ENCODE measurements at regions of chr16 and their contacts with region 1.

Region 1: DNA sequence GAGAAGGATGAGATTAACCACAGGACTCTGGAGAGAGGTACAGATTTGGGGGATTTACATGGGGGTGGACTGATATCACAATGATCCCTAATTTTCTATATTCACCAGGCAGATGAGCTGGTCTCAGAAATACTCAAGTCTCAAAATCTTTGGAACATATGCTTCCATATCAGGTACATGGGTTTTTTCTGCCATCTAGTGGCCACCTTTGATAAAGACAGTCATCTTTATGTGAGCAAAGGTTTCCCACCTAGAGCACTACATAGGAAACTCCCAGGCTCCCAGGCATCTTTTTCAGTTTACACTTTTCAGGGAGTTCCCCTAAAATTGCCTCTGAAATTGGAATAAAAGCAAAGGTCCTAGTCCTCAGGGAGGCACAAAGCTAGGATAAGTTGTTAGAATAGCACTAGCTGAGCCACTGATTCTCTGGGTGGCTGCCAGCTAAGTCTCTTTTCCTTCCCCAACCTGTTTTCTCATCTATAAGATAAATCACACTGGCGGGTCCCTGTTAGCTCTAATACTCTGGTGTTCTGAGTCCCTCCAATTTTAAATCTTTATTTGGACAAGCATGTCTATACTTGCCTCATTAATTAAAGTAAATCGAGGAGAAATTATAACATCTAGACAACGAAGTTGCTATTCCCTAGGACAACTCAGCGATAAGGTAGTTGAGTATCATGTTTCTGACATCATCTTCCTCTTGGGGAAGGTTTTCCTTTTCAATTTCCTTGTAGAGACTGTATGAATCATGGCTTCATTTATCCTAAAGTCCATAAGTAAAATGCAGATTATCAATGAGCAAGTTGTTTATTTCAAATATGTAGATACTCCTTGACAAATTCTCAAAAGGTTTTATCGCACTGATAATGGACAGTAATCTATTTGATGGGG is 19.0 kb upstream of the MON1B start:
- DNase-seq: peak; percentile 51
- H3K4me3 ChIP-seq: no peak overlapping the region
- H3K27ac ChIP-seq: no peak overlapping the region
- H3K4me1 ChIP-seq: no peaks in the 10 kb centered on the region
- H3K27me3 ChIP-seq: peaks cover 2% of the 10 kb centered on the region
- CTCF ChIP-seq: peak; percentile 48 to 71

Region 2: DNA sequence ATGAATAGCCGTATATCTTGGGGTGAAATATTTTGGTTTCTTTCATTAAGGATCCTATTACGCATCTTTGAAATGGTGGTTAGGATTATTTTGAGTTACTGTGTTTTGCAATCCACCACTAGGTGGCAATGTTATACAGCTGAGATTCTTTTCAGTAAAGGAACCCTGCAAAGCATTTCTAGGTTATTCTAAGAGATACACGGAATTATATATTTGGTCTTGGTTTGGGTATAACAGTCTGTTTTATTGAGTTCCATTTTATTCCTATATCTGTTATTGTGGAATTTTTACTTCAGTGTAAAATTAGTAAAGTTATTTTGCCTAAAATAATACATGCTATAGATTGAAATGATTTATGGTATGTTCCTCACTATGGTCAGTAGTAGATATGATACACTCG is 1382.8 kb before region 1 on chr16:
- CTCF ChIA-PET with region 1: no interaction called
- dilution Hi-C with region 1: loop called (anchors 25 kb)
- in situ Hi-C with region 1: loop called (anchors 10 kb)
- intact Hi-C with region 1: loop called (anchors 1 kb)
- DNase-seq: peak; percentile 39
- H3K4me3 ChIP-seq: no peak overlapping the region
- H3K27ac ChIP-seq: no peak overlapping the region
- H3K4me1 ChIP-seq: no peaks in the 10 kb centered on the region
- H3K27me3 ChIP-seq: no peaks in the 10 kb centered on the region
- CTCF ChIP-seq: peak; percentile 63 to 69

Region 3: DNA sequence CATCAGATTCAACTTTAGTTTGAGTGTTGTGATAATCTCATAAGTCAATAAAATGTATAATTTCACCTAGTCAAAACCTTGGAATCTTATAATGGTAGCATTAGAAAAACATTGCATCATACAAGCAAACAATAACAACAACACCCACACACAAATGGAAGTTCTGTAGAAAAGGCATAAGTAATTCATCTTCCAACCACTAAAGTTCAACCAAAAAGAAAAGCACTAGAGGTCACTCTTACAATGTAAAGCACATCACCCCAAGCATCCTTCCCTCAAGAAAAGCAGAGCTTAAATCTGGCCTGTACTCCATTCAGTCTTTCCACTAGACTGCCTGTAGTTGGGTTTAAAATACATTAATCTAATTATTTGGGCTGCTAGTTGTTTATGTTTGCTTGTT is 893.0 kb before region 1 on chr16:
- CTCF ChIA-PET with region 1: no interaction called
- dilution Hi-C with region 1: no loop called
- in situ Hi-C with region 1: no loop called
- intact Hi-C with region 1: loop called (anchors 10 kb)
- DNase-seq: peak; percentile 7
- H3K4me3 ChIP-seq: no peak overlapping the region
- H3K27ac ChIP-seq: no peak overlapping the region
- H3K4me1 ChIP-seq: no peaks in the 10 kb centered on the region
- H3K27me3 ChIP-seq: peaks cover 4% of the 10 kb centered on the region
- CTCF ChIP-seq: peak; percentile 7 to 42

Region 4: DNA sequence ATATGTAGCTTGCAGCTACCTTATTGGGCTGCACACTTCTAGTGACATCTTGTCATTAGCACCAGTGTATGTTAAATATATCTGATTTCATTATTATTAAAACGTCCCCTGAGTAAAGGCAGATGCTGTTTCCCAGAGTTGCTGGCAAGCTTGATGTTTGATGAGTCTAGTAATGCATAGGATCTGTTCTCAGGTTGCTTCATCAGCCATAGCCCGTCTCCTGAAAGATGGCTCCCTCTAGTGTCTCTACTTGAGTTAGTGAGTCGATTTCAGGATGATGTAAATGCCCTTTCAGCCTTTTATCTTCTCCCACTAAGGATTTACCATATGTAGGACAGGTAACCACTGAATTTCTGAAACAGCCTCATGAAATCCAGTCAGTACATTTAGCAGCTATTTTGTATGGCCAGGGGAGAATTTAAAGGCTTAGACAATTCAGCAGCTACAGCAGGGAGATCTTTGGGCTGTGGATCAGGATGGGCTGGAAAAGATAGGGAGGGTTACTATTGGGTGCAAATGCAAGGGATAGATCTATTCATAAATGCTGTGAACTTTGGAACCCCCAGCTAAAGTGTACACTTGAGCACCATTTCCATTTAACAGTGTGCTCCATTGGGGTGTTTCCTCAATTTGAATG is 518.5 kb before region 1 on chr16:
- CTCF ChIA-PET with region 1: no interaction called
- dilution Hi-C with region 1: no loop called
- in situ Hi-C with region 1: no loop called
- intact Hi-C with region 1: loop called (anchors 2 kb)
- DNase-seq: peak; percentile 53
- H3K4me3 ChIP-seq: no peak overlapping the region
- H3K27ac ChIP-seq: no peak overlapping the region
- H3K4me1 ChIP-seq: no peaks in the 10 kb centered on the region
- H3K27me3 ChIP-seq: no peaks in the 10 kb centered on the region
- CTCF ChIP-seq: peak; percentile 70 to 83

Region 5: GRCh38 chr16:76748461-76749348 is 423.3 kb before region 1 on chr16:
- CTCF ChIA-PET with region 1: no interaction called
- dilution Hi-C with region 1: no loop called
- in situ Hi-C with region 1: no loop called
- intact Hi-C with region 1: loop called (anchors 2 kb)
- DNase-seq: no peak
- H3K4me3 ChIP-seq: no peak overlapping the region
- H3K27ac ChIP-seq: no peak overlapping the region
- H3K4me1 ChIP-seq: no peaks in the 10 kb centered on the region
- H3K27me3 ChIP-seq: no peaks in the 10 kb centered on the region
- CTCF ChIP-seq: no peak

Region 6: GRCh38 chr16:77374384-77374783 is 202.4 kb after region 1 on chr16:
- CTCF ChIA-PET with region 1: no interaction called
- dilution Hi-C with region 1: no loop called
- in situ Hi-C with region 1: no loop called
- intact Hi-C with region 1: no loop called
- DNase-seq: peak; percentile 44
- H3K4me3 ChIP-seq: no peak overlapping the region
- H3K27ac ChIP-seq: no peak overlapping the region
- H3K4me1 ChIP-seq: no peaks in the 10 kb centered on the region
- H3K27me3 ChIP-seq: no peaks in the 10 kb centered on the region
- CTCF ChIP-seq: no peak